HepG2 (cell line): ENCODE measurements at regions of chr16 and their contacts with region 1.

Region 1: DNA sequence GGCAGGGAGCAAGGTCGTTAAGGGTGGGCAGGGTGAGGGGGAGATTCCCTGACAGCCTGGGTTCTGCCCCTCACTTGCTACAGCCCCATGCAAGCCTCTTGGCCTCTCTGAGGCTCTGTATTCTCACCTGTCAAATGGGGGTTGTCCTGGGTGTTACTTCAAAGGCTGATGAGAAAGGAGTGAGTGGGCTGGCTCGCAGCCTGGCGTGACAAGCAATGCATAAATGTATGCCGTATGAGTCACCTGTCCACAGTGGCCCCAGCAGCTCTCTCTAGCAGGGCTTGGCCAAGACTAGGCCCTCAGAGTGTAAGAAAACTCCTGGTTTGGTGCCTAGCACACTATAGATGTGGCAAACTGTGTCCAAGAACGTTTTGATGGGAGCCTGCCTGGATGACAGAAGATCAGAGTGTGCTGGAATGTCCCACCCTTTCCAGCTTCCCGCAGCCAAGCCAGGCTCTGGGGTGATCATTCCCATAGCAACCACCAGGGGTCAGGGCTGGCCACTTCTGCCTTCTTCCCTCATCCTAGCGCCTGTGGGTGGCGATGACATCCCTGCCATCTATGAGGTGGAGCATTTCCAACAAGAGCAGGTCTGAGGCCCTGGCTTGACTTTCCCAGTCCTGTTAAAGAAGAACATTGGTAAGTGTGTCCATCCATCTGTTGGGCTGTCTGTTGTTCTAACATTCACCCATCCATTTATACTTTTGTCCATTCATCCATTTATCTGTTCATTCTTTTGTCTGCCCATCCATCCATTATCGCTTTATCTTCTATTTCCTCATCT is 37.2 kb upstream of the ADGRG1 start:
- DNase-seq: peak; percentile 80
- ATAC-seq: peak; percentile 99
- H3K4me3 ChIP-seq: no peak overlapping the region
- H3K27ac ChIP-seq: no peak overlapping the region
- H3K4me1 ChIP-seq: peaks cover 9% of the 10 kb centered on the region; the same call in 1 of the 2 replicates
- H3K27me3 ChIP-seq: no peaks in the 10 kb centered on the region; a peak in 1 of 5 replicates
- CTCF ChIP-seq: peak; percentile 97
- EP300 ChIP-seq: no peak
- POLR2A ChIP-seq: no peak
- RAD21 ChIP-seq: peak; percentile 91

Region 2: DNA sequence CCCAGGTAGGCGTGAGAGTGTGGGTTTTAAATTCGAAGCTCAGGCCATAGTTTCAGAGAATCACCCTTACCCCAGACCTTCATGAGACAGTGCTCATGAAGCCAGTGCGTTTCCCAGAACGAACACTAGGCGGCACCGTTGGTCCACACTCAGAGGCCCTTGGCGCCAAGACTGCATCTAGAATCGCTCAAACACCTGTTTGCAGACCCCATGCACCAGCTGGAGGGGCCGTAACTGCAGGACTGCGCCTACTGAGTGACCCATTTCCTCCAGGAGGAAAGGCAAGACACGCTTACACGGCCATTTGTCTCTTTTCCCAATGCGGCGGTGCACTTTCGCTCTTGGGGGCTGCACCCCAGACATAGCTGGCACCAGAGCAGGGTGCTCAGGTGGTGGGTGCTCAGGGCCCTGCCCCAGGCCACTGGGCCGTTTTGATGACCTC is 14.8 kb before region 1 on chr16:
- CTCF ChIA-PET with region 1: interaction called, 7 read pairs
- POLR2A ChIA-PET with region 1: no interaction called
- in situ Hi-C with region 1: no loop called
- intact Hi-C with region 1: loop called (anchors 2 kb)
- DNase-seq: peak; percentile 59
- ATAC-seq: peak; percentile 90
- H3K4me3 ChIP-seq: no peak overlapping the region
- H3K27ac ChIP-seq: no peak overlapping the region
- H3K4me1 ChIP-seq: peaks cover 10% of the 10 kb centered on the region; the same call in 1 of the 2 replicates
- H3K27me3 ChIP-seq: no peaks in the 10 kb centered on the region
- CTCF ChIP-seq: peak; percentile 98
- EP300 ChIP-seq: no peak
- POLR2A ChIP-seq: no peak
- RAD21 ChIP-seq: peak; percentile 85